ENCODE measurements at regions of chr5 and their contacts with region 1.

Region 1: GRCh38 chr5:143682246-143682905 is 129.6 kb upstream of the HMHB1 start:
- DNase-seq: no peak
- ATAC-seq: no peak
- H3K4me3 ChIP-seq: no peak overlapping the region
- H3K27ac ChIP-seq: no peak overlapping the region
- H3K4me1 ChIP-seq: no peaks in the 10 kb centered on the region
- H3K27me3 ChIP-seq: no peaks in the 10 kb centered on the region
- CTCF ChIP-seq: no peak
- EP300 ChIP-seq: no peak
- POLR2A ChIP-seq: no peak
- RAD21 ChIP-seq: no peak

Region 2: GRCh38 chr5:143464723-143465490 is 217.5 kb before region 1 on chr5:
- CTCF ChIA-PET with region 1: no interaction called
- POLR2A ChIA-PET with region 1: no interaction called
- RAD21 ChIA-PET with region 1: no interaction called
- SMC1A ChIA-PET with region 1: no interaction called
- in situ Hi-C with region 1: no loop called
- intact Hi-C with region 1: no loop called
- DNase-seq: no peak
- ATAC-seq: no peak
- H3K4me3 ChIP-seq: no peak overlapping the region
- H3K27ac ChIP-seq: no peak overlapping the region
- H3K4me1 ChIP-seq: no peaks in the 10 kb centered on the region
- H3K27me3 ChIP-seq: no peaks in the 10 kb centered on the region
- CTCF ChIP-seq: no peak
- EP300 ChIP-seq: no peak
- POLR2A ChIP-seq: no peak
- RAD21 ChIP-seq: no peak

Region 3: DNA sequence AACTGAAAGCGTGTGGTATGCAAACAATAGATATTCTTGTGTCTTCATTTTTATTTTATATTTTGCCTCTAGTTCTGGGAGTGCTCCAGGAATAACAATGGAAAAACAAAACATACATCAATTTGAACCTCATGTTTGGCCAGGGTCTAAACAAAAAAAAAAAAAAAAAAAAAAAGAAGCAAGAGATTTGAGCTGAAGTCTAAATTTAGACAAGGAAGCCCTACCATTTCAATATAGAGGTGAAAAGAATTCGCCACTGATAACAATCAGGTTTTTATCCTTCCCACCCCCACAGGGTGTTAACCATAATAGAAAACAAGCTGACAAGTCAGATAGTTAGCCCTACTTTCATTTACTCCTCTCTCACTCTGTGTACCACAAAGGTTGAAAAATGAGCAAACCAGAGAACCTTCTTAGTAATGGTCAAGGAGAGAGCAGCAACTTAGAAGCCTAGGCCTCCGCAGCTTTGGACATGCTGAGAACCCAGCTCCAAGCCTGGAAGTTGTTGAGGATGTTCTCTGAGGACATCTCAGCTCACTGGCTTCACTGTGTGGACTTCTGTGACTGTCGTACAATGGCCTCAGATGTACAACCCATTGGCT is 11.4 kb after region 1 on chr5:
- CTCF ChIA-PET with region 1: interaction called, 13 read pairs
- POLR2A ChIA-PET with region 1: interaction called, 4 read pairs
- RAD21 ChIA-PET with region 1: interaction called, 3 read pairs
- SMC1A ChIA-PET with region 1: interaction called, 10 read pairs
- in situ Hi-C with region 1: no loop called
- intact Hi-C with region 1: no loop called
- DNase-seq: peak; percentile 31
- ATAC-seq: peak; percentile 100
- H3K4me3 ChIP-seq: no peak overlapping the region
- H3K27ac ChIP-seq: no peak overlapping the region
- H3K4me1 ChIP-seq: peaks cover 7% of the 10 kb centered on the region
- H3K27me3 ChIP-seq: no peaks in the 10 kb centered on the region
- CTCF ChIP-seq: no peak
- EP300 ChIP-seq: peak; percentile 79 to 86
- POLR2A ChIP-seq: no peak
- RAD21 ChIP-seq: no peak